PC-9 (cell line): ENCODE measurements at regions of chr10 and their contacts with region 1.

Region 1: GRCh38 chr10:118459726-118460193 is 117.6 kb upstream of the FAM204A start:
- DNase-seq: peak in 1 of 2 experiments; percentile 37
- H3K4me3 ChIP-seq: no peak overlapping the region; the same call in 1 of the 2 replicates
- H3K27ac ChIP-seq: no peak overlapping the region
- H3K4me1 ChIP-seq: peaks cover 5% of the 10 kb centered on the region; the same call in 1 of the 2 replicates
- H3K27me3 ChIP-seq: no peaks in the 10 kb centered on the region; the same call in 1 of the 2 replicates
- CTCF ChIP-seq: peak; percentile 74

Region 2: GRCh38 chr10:117496616-117497028 is 963.1 kb before region 1 on chr10:
- CTCF ChIA-PET with region 1: no interaction called
- POLR2A ChIA-PET with region 1: no interaction called
- intact Hi-C with region 1: loop called (anchors 10 kb)
- DNase-seq: peak; percentile 57 to 58
- H3K4me3 ChIP-seq: no peak overlapping the region
- H3K27ac ChIP-seq: no peak overlapping the region
- H3K4me1 ChIP-seq: no peaks in the 10 kb centered on the region
- H3K27me3 ChIP-seq: peaks cover 11% of the 10 kb centered on the region
- CTCF ChIP-seq: peak; percentile 86

Region 3: GRCh38 chr10:118259288-118259906 is 200.4 kb before region 1 on chr10:
- CTCF ChIA-PET with region 1: no interaction called
- POLR2A ChIA-PET with region 1: no interaction called
- intact Hi-C with region 1: no loop called
- DNase-seq: peak in 1 of 2 experiments; percentile 1
- H3K4me3 ChIP-seq: no peak overlapping the region
- H3K27ac ChIP-seq: no peak overlapping the region
- H3K4me1 ChIP-seq: no peaks in the 10 kb centered on the region
- H3K27me3 ChIP-seq: peaks cover 25% of the 10 kb centered on the region
- CTCF ChIP-seq: peak; percentile 68

Region 4: GRCh38 chr10:118412932-118413331 is 46.8 kb before region 1 on chr10:
- CTCF ChIA-PET with region 1: no interaction called
- POLR2A ChIA-PET with region 1: no interaction called
- intact Hi-C with region 1: no loop called
- DNase-seq: no peak
- H3K4me3 ChIP-seq: no peak overlapping the region
- H3K27ac ChIP-seq: no peak overlapping the region
- H3K4me1 ChIP-seq: no peaks in the 10 kb centered on the region
- H3K27me3 ChIP-seq: peaks cover 17% of the 10 kb centered on the region; the same call in 1 of the 2 replicates
- CTCF ChIP-seq: no peak

Region 5: GRCh38 chr10:118543714-118544400 is 84.1 kb after region 1 on chr10:
- CTCF ChIA-PET with region 1: interaction called, 4 read pairs
- POLR2A ChIA-PET with region 1: no interaction called
- intact Hi-C with region 1: loop called (anchors 1 kb)
- DNase-seq: peak; percentile 43 to 56
- H3K4me3 ChIP-seq: no peak overlapping the region
- H3K27ac ChIP-seq: no peak overlapping the region
- H3K4me1 ChIP-seq: no peaks in the 10 kb centered on the region; the same call in 1 of the 2 replicates
- H3K27me3 ChIP-seq: no peaks in the 10 kb centered on the region
- CTCF ChIP-seq: peak; percentile 78

Region 6: DNA sequence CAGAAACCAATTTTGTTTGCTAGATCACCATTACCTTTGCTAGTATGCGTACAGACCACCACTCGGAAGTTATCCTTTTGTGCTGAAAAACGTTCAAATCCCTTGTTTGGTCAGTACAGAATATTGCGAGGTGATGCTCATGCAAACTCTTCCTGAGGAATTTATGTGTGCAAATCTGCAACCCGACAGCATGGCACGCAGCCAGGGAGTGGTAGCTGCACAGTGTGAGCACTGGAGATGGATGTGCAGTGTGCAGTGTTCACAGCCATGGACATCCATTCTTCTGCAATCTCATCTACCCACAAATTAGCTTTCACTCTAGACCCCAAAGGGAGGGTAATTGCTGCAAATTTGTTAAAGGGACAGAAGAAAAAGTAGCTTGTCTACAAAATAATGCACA is 222.8 kb after region 1 on chr10:
- CTCF ChIA-PET with region 1: no interaction called
- POLR2A ChIA-PET with region 1: no interaction called
- intact Hi-C with region 1: no loop called
- DNase-seq: no peak
- H3K4me3 ChIP-seq: no peak overlapping the region
- H3K27ac ChIP-seq: no peak overlapping the region
- H3K4me1 ChIP-seq: no peaks in the 10 kb centered on the region
- H3K27me3 ChIP-seq: no peaks in the 10 kb centered on the region
- CTCF ChIP-seq: no peak